ENCODE measurements at regions of chr20 and their contacts with region 1.

Region 1: GRCh38 chr20:23937303-23938117 is 51.1 kb downstream of the GGTLC1 start:
- DNase-seq: peak; percentile 54 to 96 (median 78)

Region 2: DNA sequence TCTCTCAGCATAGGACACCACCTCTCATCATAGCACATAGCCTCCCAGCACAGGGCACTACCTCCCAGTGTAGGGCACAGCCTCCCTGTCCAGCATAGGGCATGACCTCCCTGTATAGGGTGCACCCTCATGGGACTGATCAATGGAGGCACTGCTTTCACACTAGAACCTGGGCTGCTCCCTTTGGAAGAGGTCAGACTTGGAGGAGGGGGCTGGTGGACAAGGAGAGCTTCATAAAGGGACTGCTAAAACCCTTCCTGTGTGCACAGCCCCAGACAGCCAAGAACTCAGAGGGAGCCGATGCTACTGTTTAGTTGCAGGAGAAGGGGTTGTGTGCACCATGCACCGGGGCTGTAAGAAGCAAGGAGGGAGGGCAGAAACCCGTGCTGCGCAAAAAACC is 226.7 kb before region 1 on chr20:
- intact Hi-C with region 1: no loop called
- DNase-seq: no peak

Region 3: DNA sequence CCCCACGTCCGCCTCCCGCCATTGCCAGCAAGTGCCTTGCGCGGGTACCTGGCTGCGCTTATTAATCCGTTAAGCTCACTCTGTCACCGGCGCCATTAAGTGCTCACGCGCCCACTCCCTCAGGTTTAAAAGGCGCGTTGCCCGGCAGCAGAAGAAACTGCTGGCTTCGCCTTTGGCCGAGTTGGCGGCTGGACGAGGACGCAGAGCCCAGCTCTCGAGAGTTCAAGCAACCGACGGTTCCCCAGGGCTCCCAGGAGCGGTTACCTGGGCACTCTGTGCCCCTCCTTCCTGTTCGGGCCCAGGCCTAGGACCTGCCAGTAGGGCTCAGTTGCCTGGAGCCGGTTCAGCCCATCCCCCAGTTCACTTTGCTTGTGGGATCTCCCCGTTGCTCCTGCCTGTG is 51.1 kb after region 1 on chr20 and contains the start of gene GGTLC1:
- intact Hi-C with region 1: loop called (anchors 5 kb)
- DNase-seq: peak in 1 of 10 donors; percentile 70

Region 4: DNA sequence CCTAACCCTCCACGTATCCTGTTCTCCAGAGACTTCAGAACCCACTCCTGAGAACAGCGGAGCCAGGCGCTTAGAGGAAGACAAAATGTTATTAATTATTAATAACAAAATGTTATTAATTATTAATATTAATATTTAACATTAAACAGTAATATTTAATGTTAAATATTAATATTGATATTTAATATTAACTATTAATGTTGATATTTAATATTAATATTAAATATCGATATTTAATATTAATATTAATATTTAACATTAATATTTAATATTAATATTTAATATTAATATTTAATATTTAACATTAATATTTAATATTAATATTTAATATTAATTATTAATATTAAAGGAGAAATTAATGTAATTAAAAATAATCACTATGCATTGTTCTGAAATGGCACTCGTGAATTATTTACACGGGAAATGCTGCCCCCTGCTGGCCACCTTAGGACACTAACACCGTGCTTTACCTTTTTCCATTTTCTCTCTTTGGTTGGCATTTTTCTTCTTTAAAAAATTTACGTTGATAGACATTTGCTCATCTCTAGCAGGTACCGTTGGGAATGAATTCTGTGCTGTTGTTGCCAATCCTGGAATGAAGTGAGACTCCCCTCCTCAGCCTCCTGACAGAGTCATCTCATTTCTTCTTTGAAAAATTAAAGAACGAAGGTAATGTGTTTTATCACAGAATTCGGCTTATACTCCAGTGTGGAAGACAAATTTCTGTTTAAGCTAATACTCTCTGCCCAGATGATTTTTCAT is 58.6 kb after region 1 on chr20:
- intact Hi-C with region 1: loop called (anchors 5 kb)
- DNase-seq: peak in 7 of 10 donors; percentile 43 to 92 (median 67)